ENCODE measurements at regions of chr19 and their contacts with region 1.

Region 1: GRCh38 chr19:41837981-41838708 is 6.3 kb downstream of the LYPD4 start:
- DNase-seq: no peak
- H3K4me3 ChIP-seq: no peak overlapping the region
- H3K27ac ChIP-seq: no peak overlapping the region
- H3K27me3 ChIP-seq: peaks cover 19% of the 10 kb centered on the region
- CTCF ChIP-seq: no peak

Region 2: GRCh38 chr19:41726493-41726892 is 111.7 kb before region 1 on chr19:
- CTCF ChIA-PET with region 1: no interaction called
- POLR2A ChIA-PET with region 1: no interaction called
- DNase-seq: no peak
- H3K4me3 ChIP-seq: no peak overlapping the region
- H3K27ac ChIP-seq: no peak overlapping the region
- H3K27me3 ChIP-seq: no peaks in the 10 kb centered on the region
- CTCF ChIP-seq: no peak

Region 3: DNA sequence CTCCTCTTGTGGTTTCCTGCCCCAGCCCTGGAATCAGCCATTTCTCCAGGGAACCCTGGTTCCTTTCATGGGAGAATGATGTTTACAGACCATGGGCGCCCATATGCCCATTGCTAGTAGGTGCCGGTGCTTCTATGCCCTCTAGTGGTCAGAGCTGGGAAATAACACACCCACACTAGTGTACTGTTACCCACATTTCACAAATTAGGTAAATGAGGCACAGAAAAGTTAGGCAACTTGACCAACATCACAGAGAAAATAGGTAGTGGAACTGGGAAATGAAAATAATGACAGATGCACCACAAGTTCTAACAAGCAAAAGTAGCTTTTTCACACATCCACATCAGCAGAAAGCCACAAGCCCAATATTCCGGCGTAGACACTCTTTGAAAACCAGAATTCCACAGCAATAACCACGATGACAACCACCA is 43.1 kb before region 1 on chr19:
- CTCF ChIA-PET with region 1: interaction called, 19 read pairs
- POLR2A ChIA-PET with region 1: no interaction called
- DNase-seq: no peak
- H3K4me3 ChIP-seq: no peak overlapping the region
- H3K27ac ChIP-seq: no peak overlapping the region
- H3K27me3 ChIP-seq: no peaks in the 10 kb centered on the region
- CTCF ChIP-seq: peak; percentile 81

Region 4: DNA sequence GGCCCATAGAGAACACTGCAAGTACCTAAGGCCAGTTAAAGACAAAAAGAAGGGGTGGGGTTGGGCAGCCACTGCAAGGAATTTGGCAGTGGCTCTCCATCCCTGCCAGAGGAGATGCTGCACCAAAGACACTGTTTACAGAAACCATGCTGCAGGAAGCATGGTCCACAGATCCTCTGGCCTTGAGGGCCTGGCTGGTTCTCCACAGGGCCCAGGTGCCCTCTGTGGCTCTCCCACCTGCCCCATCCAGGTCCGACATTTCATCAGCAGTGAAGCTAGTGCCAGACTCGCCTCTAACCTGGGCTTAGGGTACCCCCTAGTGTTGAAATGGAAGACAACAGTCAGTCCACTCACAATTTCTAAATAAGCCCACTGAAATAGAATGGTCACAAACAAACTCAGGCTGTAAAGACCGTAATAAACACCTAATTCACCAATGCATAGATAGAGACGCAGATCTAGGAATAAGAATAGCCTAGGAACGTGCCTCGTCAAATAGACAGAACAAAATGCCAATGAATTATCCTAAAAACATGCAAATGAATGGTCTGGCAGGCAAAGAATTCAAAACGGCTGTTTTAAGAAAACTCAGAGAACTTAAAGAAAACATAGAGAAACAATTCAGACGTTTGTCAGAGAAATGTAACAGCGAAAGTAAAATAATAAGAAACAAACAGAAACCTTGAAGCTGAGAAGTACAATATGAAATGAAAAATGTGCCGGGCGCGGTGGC is 17.0 kb before region 1 on chr19:
- CTCF ChIA-PET with region 1: interaction called, 16 read pairs
- POLR2A ChIA-PET with region 1: no interaction called
- DNase-seq: no peak
- H3K4me3 ChIP-seq: no peak overlapping the region
- H3K27ac ChIP-seq: no peak overlapping the region
- H3K27me3 ChIP-seq: no peaks in the 10 kb centered on the region
- CTCF ChIP-seq: peak; percentile 53

Region 5: GRCh38 chr19:41853344-41854167 is 15.4 kb after region 1 on chr19:
- CTCF ChIA-PET with region 1: interaction called, 13 read pairs
- POLR2A ChIA-PET with region 1: no interaction called
- DNase-seq: no peak
- H3K4me3 ChIP-seq: no peak overlapping the region
- H3K27ac ChIP-seq: no peak overlapping the region
- H3K27me3 ChIP-seq: peaks cover 46% of the 10 kb centered on the region
- CTCF ChIP-seq: no peak

Region 6: DNA sequence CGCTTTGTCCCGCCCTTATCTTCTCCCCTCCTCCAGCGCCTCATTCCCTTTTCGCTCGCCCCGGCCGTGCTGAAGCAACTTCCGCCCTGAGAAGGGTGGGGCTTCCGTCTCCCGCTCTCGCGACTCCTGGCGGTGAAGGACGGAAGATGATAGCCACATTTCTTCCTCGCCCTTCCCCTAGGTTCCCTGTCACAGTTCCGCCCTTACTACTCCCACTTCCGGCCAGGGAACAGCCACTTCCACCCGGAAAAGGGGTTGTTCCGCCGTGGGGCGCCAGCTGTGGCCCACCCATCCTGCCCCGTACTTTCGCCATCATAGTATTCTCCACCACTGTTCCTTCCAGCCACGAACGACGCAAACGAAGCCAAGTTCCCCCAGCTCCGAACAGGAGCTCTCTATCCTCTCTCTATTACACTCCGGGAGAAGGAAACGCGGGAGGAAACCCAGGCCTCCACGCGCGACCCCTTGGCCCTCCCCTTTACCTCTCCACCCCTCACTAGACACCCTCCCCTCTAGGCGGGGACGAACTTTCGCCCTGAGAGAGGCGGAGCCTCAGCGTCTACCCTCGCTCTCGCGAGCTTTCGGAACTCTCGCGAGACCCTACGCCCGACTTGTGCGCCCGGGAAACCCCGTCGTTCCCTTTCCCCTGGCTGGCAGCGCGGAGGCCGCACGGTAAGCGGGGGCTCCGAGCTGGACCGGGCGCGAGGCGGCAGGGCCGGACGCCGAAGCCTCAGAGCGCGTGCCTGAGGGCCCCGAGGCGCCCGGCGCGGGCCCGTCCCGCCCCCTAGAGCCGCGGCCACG is 21.7 kb after region 1 on chr19 and contains the start of gene RPS19:
- CTCF ChIA-PET with region 1: interaction called, 10 read pairs
- POLR2A ChIA-PET with region 1: no interaction called
- DNase-seq: peak; percentile 96
- H3K4me3 ChIP-seq: peak within 1 kb of the TSS; percentile 99
- H3K27ac ChIP-seq: peak within 1 kb of the TSS; percentile 95
- H3K27me3 ChIP-seq: peaks cover 7% of the 10 kb centered on the region
- CTCF ChIP-seq: peak; percentile 64
- polyA plus RNA-seq, gene RPS19: 1,320 and 1,738 TPM in 2 replicates

Measured in AG04450 (cell line).